HCT116 (cell line): ENCODE measurements at regions of chr16 and their contacts with region 1.

Region 1: DNA sequence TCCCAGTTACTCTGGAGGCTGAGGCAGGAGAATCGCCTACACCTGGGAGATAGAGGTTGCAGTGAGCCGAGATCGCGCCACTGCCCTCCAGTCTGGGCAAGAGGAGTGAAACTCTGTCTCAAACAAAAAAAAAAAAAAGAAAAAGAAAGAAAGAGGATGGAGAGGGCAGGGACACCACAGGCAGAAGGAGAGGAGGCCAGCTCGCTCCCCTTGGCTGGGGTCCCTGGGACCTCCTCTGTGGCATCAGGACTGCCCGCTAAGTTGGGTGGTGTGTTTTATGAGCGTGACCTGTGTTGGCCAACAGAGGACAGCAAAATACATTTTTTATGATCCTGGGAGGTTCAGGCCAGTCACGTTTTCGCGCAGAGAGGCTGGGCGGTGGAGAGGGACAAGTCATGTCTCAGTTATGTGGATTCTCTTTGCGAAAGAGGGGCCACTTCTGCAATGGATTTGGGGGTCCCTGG is 229.6 kb downstream of the MRTFB start:
- DNase-seq: peak; percentile 71
- ATAC-seq: peak; percentile 78
- H3K4me3 ChIP-seq: peak overlapping the region; percentile 55 to 57
- H3K27ac ChIP-seq: no peak overlapping the region
- H3K4me1 ChIP-seq: peaks cover 12 to 36% of the 10 kb centered on the region in 2 experiments
- H3K27me3 ChIP-seq: no peaks in the 10 kb centered on the region
- CTCF ChIP-seq: peak; percentile 55 to 83 (median 68)
- POLR2A ChIP-seq: no peak
- RAD21 ChIP-seq: peak; percentile 95

Region 2: GRCh38 chr16:14249291-14250032 is 51.3 kb before region 1 on chr16:
- CTCF ChIA-PET with region 1: no interaction called
- POLR2A ChIA-PET with region 1: no interaction called
- RAD21 ChIA-PET with region 1: no interaction called
- intact Hi-C with region 1: no loop called
- DNase-seq: peak; percentile 12
- ATAC-seq: peak; percentile 63
- H3K4me3 ChIP-seq: no peak overlapping the region
- H3K27ac ChIP-seq: no peak overlapping the region
- H3K4me1 ChIP-seq: no peaks in the 10 kb centered on the region
- H3K27me3 ChIP-seq: no peaks in the 10 kb centered on the region
- CTCF ChIP-seq: peak; percentile 48 to 98 (median 88); a peak in 5 of 6 replicates
- POLR2A ChIP-seq: no peak
- RAD21 ChIP-seq: peak; percentile 74

Region 3: GRCh38 chr16:14399378-14400284 is 98.9 kb after region 1 on chr16:
- CTCF ChIA-PET with region 1: no interaction called
- POLR2A ChIA-PET with region 1: no interaction called
- RAD21 ChIA-PET with region 1: no interaction called
- intact Hi-C with region 1: loop called (anchors 5 kb)
- DNase-seq: peak; percentile 48
- ATAC-seq: peak; percentile 88
- H3K4me3 ChIP-seq: peak overlapping the region in 1 of 2 experiments; percentile 31; a peak in 2 of 4 replicates
- H3K27ac ChIP-seq: peak overlapping the region; percentile 91
- H3K4me1 ChIP-seq: peaks cover 48 to 72% of the 10 kb centered on the region in 2 experiments
- H3K27me3 ChIP-seq: no peaks in the 10 kb centered on the region
- CTCF ChIP-seq: no peak
- POLR2A ChIP-seq: no peak
- RAD21 ChIP-seq: peak; percentile 8; the same call in 1 of the 2 replicates

Region 4: DNA sequence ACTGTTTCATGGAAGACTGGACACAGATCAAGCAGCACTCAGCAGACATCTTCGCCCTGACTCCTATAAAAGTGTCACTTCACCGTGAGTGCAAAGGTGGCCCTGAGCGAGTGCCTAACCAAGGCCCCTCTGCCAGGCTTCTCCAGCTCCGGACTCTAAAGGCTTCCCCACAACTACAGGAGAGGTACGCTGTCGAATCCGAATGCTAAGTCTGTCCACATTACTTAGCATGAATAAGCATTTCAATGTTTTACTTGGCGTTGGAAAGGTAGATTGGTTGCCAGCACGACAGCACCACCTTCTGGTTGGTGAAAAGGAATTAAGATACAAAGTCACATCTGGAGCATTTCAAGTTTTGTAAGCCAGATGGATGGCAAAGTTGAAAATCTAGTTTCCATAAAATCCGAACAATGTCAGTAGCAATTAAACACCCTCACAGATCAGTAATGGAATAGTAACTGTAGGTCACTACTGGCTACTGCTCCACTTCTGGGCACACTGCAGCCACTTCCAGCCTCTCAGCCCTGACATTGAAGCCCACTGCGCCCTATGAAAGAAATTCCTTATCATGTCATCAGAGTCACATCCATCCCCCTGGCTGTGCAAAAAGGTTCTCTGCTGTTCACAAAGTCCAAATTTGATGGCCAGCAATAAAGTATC is 228.4 kb after region 1 on chr16:
- CTCF ChIA-PET with region 1: interaction called, 4 read pairs
- POLR2A ChIA-PET with region 1: no interaction called
- RAD21 ChIA-PET with region 1: no interaction called
- intact Hi-C with region 1: loop called (anchors 1 kb)
- DNase-seq: peak; percentile 66
- ATAC-seq: peak; percentile 86
- H3K4me3 ChIP-seq: no peak overlapping the region
- H3K27ac ChIP-seq: peak overlapping the region; percentile 41; the same call in 1 of the 2 replicates
- H3K4me1 ChIP-seq: peaks cover 6 to 13% of the 10 kb centered on the region in 2 experiments; a peak in 3 of 4 replicates
- H3K27me3 ChIP-seq: no peaks in the 10 kb centered on the region
- CTCF ChIP-seq: peak; percentile 67 to 85 (median 81)
- POLR2A ChIP-seq: no peak
- RAD21 ChIP-seq: peak; percentile 99

Region 5: GRCh38 chr16:14600164-14600563 is 299.4 kb after region 1 on chr16:
- CTCF ChIA-PET with region 1: no interaction called
- POLR2A ChIA-PET with region 1: no interaction called
- RAD21 ChIA-PET with region 1: no interaction called
- intact Hi-C with region 1: loop called (anchors 2 kb)
- DNase-seq: peak; percentile 10
- ATAC-seq: peak; percentile 61; the same call in 1 of the 2 replicates
- H3K4me3 ChIP-seq: no peak overlapping the region
- H3K27ac ChIP-seq: no peak overlapping the region
- H3K4me1 ChIP-seq: no peaks in the 10 kb centered on the region
- H3K27me3 ChIP-seq: no peaks in the 10 kb centered on the region
- CTCF ChIP-seq: peak; percentile 23 to 59 (median 45); a peak in 5 of 6 replicates
- POLR2A ChIP-seq: no peak
- RAD21 ChIP-seq: no peak

Region 6: DNA sequence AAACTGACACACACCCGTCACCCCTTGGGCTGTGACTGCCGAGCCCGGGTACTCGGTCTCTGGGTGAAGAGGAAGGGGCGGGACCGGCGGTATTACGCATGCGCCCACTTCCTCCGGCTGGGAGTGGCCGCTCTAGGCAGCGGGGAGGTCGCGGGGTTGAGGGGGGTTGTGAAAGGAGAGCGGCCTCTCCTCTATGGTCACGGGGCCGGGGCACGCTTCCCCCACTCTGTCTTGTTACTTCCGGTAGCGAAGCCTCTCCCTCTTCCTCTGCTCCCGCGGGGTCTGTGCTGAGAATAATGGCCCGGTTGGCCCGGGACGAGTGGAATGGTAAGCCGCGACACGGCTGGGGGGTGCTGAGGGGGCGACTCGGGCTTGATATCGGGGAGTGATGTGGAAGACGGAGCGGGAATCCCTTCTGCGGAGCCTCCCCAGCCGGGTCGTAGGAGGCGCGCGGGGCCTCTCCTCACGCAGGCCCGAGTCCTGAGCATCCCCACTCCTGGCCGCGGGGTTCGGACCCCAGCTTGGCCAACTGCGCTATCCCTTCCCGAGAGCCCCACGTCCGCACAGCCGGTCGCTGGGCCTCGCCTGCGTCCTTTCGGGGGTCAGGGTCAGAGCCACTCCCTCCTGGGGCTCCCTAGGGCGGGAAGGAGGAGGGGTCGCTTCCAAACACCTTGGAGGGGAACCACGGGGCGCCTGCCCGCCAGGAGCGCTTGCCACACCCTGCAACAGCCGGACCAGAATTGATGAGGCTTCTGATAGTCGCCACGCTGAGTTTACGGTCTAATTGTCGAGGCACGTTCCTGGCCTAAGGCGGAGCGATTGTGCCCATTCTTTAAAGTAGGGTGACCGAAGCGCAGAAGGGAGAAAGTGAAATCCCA is 332.2 kb after region 1 on chr16 and contains the start of gene BFAR:
- CTCF ChIA-PET with region 1: no interaction called
- POLR2A ChIA-PET with region 1: no interaction called
- RAD21 ChIA-PET with region 1: no interaction called
- intact Hi-C with region 1: loop called (anchors 5 kb)
- DNase-seq: peak; percentile 89
- ATAC-seq: peak; percentile 76
- H3K4me3 ChIP-seq: peak within 1 kb of the TSS; percentile 75 to 97
- H3K27ac ChIP-seq: peak within 1 kb of the TSS; percentile 89
- H3K4me1 ChIP-seq: peaks cover 25 to 38% of the 10 kb centered on the region in 2 experiments
- H3K27me3 ChIP-seq: no peaks in the 10 kb centered on the region
- CTCF ChIP-seq: no peak
- POLR2A ChIP-seq: no peak
- RAD21 ChIP-seq: no peak
- total RNA-seq, gene BFAR: 49.7 TPM